Vagina (tissue), 2 donors: ENCODE measurements at regions of chr21 and their contacts with region 1.

Region 1: DNA sequence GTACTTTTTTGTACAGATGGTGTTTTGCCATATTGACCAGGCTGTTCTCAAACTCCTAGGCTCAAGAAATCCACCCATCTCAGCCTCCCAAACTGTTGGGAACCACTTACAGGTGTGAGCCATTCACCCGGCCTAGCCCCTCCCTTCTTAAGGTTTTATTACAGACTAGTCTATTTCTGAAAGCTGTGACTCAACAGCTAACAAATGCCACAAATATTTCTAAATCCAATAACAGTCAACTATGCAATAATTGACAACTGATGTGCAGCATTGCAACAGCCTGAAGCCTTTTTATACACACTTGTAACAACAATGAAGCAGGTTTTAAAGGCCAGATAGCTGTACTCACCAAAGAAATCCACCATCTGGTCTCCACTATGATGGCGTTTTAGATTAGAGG is 51.4 kb downstream of the GRIK1 start:
- DNase-seq: no peak
- H3K4me3 ChIP-seq: no peak overlapping the region
- H3K27ac ChIP-seq: no peak overlapping the region
- H3K4me1 ChIP-seq: no peaks in the 10 kb centered on the region
- H3K27me3 ChIP-seq: no peaks in the 10 kb centered on the region
- CTCF ChIP-seq: no peak
- POLR2A ChIP-seq: no peak

Region 2: GRCh38 chr21:30652891-30653290 is 764.5 kb after region 1 on chr21:
- intact Hi-C with region 1: loop called (anchors 10 kb)
- DNase-seq: no peak
- H3K4me3 ChIP-seq: no peak overlapping the region
- H3K27ac ChIP-seq: no peak overlapping the region
- H3K4me1 ChIP-seq: no peaks in the 10 kb centered on the region
- H3K27me3 ChIP-seq: no peaks in the 10 kb centered on the region
- CTCF ChIP-seq: no peak
- POLR2A ChIP-seq: no peak